ENCODE measurements at regions of chr9 and their contacts with region 1.

Region 1: GRCh38 chr9:97900738-97901565 is 21.3 kb downstream of the TRMO start:
- DNase-seq: peak in 2 of 3 donors; percentile 44 to 50
- H3K4me3 ChIP-seq: no peak overlapping the region
- H3K4me3 Mint-ChIP-seq: no peak overlapping the region
- H3K27ac ChIP-seq: no peak overlapping the region
- H3K27ac Mint-ChIP-seq: peak overlapping the region in 1 of 7 donors; percentile 50
- H3K4me1 ChIP-seq: peaks cover 19 to 27% of the 10 kb centered on the region in 2 donors
- H3K4me1 Mint-ChIP-seq: peaks cover 26% of the 10 kb centered on the region
- H3K27me3 ChIP-seq: no peaks in the 10 kb centered on the region
- H3K27me3 Mint-ChIP-seq: peaks cover 0 to 2% (median 0%) of the 10 kb centered on the region in 3 donors
- CTCF ChIP-seq: peak; percentile 78

Region 2: DNA sequence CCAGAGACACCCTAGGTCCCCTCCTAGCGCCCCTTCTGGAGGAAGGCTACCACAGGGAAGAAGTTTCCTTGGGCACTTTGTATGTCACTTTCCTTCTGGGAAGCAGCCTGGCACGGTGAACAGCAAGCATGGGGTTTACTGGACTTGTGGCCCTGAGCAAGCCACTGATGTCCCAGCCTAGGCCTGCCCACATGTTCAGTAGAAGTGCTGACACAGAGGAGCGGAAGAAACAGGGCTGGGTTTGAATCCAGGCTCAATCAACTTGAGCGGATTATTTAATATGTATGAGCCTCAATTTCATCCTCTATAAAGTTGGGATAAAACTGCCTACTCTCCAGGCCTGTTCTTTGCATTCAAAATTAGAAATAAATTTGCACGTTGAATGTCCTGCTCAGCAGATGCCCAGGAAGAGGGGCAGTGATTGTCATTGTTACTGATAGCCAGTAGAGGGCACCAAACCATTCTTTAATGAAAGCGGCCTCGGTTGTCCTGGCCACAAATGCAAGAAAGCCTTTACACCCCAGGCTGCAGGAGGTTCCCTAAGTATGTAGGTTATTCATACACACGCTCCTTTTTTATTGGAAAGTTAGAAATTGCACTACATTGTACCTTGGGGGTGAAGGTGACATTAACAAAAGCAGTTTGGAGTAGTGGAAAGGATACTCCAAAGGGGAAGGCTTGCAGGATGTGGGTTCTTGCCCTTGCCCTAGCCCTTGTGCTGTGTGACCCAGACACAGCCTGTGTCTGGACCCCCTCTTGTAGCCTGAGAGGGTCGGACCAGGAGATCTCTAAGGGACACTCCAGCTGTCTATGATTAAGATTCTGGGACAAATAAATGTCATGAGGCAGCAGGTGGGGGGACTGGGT is 190.4 kb before region 1 on chr9:
- intact Hi-C with region 1: loop called in 1 of 2 experiments (anchors 10 kb)
- DNase-seq: peak; percentile 48 to 65 (median 62)
- H3K4me3 ChIP-seq: no peak overlapping the region
- H3K4me3 Mint-ChIP-seq: peak overlapping the region in 1 of 2 donors; percentile 68
- H3K27ac ChIP-seq: no peak overlapping the region
- H3K27ac Mint-ChIP-seq: no peak overlapping the region
- H3K4me1 ChIP-seq: peaks cover 0 to 4% of the 10 kb centered on the region in 2 donors
- H3K4me1 Mint-ChIP-seq: peaks cover 7% of the 10 kb centered on the region
- H3K27me3 ChIP-seq: peaks cover 26 to 46% of the 10 kb centered on the region in 2 donors
- H3K27me3 Mint-ChIP-seq: peaks cover 21 to 57% (median 30%) of the 10 kb centered on the region in 3 donors
- CTCF ChIP-seq: peak; percentile 86

Region 3: GRCh38 chr9:98129451-98129881 is 228.5 kb after region 1 on chr9:
- intact Hi-C with region 1: loop called in 1 of 2 experiments (anchors 10 kb)
- DNase-seq: peak; percentile 90 to 96 (median 95)
- H3K4me3 ChIP-seq: peak overlapping the region in 1 of 3 experiments; percentile 33
- H3K4me3 Mint-ChIP-seq: peak overlapping the region; percentile 12 to 60
- H3K27ac ChIP-seq: peak overlapping the region; percentile 84 to 88
- H3K27ac Mint-ChIP-seq: peak overlapping the region; percentile 91 to 98 (median 94)
- H3K4me1 ChIP-seq: peaks cover 23% of the 10 kb centered on the region in 2 donors
- H3K4me1 Mint-ChIP-seq: peaks cover 28% of the 10 kb centered on the region
- H3K27me3 ChIP-seq: no peaks in the 10 kb centered on the region
- H3K27me3 Mint-ChIP-seq: peaks cover 0 to 4% (median 0%) of the 10 kb centered on the region in 3 donors
- CTCF ChIP-seq: no peak